Calu3 (cell line): ENCODE measurements at regions of chr10 and their contacts with region 1.

Region 1: GRCh38 chr10:71431239-71432100 is 34.8 kb downstream of the CDH23 start:
- DNase-seq: no peak
- H3K4me3 Mint-ChIP-seq: no peak overlapping the region
- H3K27ac Mint-ChIP-seq: no peak overlapping the region
- H3K4me1 Mint-ChIP-seq: peaks cover 16% of the 10 kb centered on the region
- H3K27me3 Mint-ChIP-seq: peaks cover 73% of the 10 kb centered on the region
- CTCF ChIP-seq: peak; percentile 34

Region 2: GRCh38 chr10:71068861-71069271 is 362.6 kb before region 1 on chr10:
- CTCF ChIA-PET with region 1: no interaction called
- intact Hi-C with region 1: no loop called
- DNase-seq: peak; percentile 29
- H3K4me3 Mint-ChIP-seq: no peak overlapping the region
- H3K27ac Mint-ChIP-seq: no peak overlapping the region
- H3K4me1 Mint-ChIP-seq: no peaks in the 10 kb centered on the region
- H3K27me3 Mint-ChIP-seq: peaks cover 83% of the 10 kb centered on the region
- CTCF ChIP-seq: no peak

Region 3: GRCh38 chr10:71635867-71636266 is 204.4 kb after region 1 on chr10:
- CTCF ChIA-PET with region 1: interaction called, 10 read pairs
- intact Hi-C with region 1: no loop called
- DNase-seq: no peak
- H3K4me3 Mint-ChIP-seq: no peak overlapping the region
- H3K27ac Mint-ChIP-seq: no peak overlapping the region
- H3K4me1 Mint-ChIP-seq: peaks cover 11% of the 10 kb centered on the region
- H3K27me3 Mint-ChIP-seq: peaks cover 70% of the 10 kb centered on the region
- CTCF ChIP-seq: no peak

Region 4: GRCh38 chr10:72079356-72079755 is 647.9 kb after region 1 on chr10:
- CTCF ChIA-PET with region 1: no interaction called
- intact Hi-C with region 1: no loop called
- DNase-seq: no peak
- H3K4me3 Mint-ChIP-seq: no peak overlapping the region
- H3K27ac Mint-ChIP-seq: peak overlapping the region; percentile 97
- H3K4me1 Mint-ChIP-seq: peaks cover 67% of the 10 kb centered on the region
- H3K27me3 Mint-ChIP-seq: no peaks in the 10 kb centered on the region
- CTCF ChIP-seq: no peak